Activated T-helper 1 cell treated with anti-CD3 and anti-CD28 coated beads, Interleukin-12 subunit alpha, Interleukin-12 subunit beta, Interleukin-2, Interleukin-4 antibody, amounts not matched to agents 30 ng/mL and 10 ng/mL and 1 ng/mL, durations not matched to agents 14 hours and 24 hours and 36 hours (primary cell): ENCODE measurements at regions of chr2 and their contacts with region 1.

Region 1: GRCh38 chr2:20822535-20823490 is at the start of gene LDAH:
- DNase-seq: peak; percentile 74
- H3K4me3 Mint-ChIP-seq: peak within 1 kb of the TSS; percentile 98
- H3K27ac Mint-ChIP-seq: peak within 1 kb of the TSS; percentile 98
- H3K4me1 Mint-ChIP-seq: peaks cover 28% of the 10 kb centered on the region
- H3K27me3 Mint-ChIP-seq: no peaks in the 10 kb centered on the region
- total RNA-seq, gene LDAH: 34.6 and 34.7 TPM in 2 replicates

Region 2: GRCh38 chr2:19362755-19363473 is 1459.9 kb before region 1 on chr2:
- intact Hi-C with region 1: loop called (anchors 5 kb)
- DNase-seq: no peak
- H3K4me3 Mint-ChIP-seq: peak overlapping the region; percentile 90
- H3K27ac Mint-ChIP-seq: no peak overlapping the region
- H3K4me1 Mint-ChIP-seq: peaks cover 24% of the 10 kb centered on the region
- H3K27me3 Mint-ChIP-seq: peaks cover 94% of the 10 kb centered on the region

Region 3: DNA sequence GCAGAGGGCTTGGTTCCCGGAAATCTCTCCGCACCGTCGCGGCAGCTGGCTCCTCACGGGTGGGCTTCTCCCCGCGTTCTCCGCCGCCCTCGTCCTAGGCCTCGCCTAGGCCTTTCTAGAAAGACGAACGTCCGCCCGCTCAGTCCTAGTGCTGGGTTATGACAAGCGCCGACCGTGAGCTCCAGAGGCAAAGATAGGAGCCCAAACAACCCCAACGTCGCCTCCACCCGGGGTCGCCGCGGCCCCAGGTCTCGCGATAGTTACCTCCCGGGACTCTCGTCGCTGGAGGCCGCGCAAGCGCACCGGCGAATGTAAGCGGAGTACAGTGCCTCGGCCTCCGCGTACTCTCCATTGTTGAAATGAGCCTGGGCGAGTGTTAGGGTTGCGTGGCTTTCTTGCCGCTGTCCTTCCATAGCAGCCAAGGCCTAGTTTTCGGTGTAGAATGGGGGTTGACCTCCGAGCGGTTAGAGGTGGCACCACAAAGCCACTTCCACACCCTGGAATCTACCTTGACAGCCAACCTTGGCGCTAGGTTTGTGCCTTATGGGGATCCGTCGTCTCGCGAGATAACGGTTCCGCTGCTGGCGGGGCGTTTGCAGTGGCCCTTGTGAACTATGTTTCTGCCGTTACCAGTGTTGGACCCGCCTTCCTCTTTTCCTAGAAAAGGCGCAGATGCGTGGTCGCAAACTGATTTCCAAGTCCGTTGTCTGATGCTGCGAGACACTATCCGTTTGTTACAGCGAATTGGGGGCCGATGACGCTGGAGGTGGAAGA is 921.2 kb before region 1 on chr2 and contains the start of gene TTC32:
- intact Hi-C with region 1: loop called (anchors 2 kb)
- DNase-seq: peak; percentile 89
- H3K4me3 Mint-ChIP-seq: peak within 1 kb of the TSS; percentile 91
- H3K27ac Mint-ChIP-seq: peak within 1 kb of the TSS; percentile 94
- H3K4me1 Mint-ChIP-seq: peaks cover 48% of the 10 kb centered on the region
- H3K27me3 Mint-ChIP-seq: peaks cover 9% of the 10 kb centered on the region
- total RNA-seq, gene TTC32: 14.0 and 15.7 TPM in 2 replicates

Region 4: DNA sequence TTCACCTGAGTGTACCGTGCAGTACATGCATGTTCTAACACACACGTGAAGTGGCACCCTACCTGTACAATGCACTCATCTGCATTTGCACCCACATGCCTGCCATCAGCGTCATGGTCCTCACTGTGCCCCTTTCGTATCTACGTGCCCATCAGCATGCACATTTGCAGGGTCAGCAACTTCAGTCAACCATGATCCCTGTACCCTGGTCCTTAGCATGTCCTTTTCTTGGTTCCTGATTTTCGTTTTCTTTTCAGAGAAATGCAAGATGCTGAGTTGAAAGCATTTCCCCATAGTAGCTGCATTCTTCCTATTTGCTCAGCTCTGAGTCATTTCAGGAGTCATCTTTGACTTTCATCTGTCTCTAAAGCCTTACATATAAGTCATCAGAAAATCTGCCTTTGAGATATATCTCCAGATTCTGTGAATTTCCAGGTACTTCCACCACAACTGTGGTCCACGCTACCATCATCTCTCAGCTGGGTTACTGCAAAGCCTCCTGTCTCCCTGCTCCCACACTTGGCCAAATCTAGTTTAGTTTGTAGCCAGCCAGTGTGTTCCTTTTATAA is 457.5 kb before region 1 on chr2:
- intact Hi-C with region 1: loop called (anchors 2 kb)
- DNase-seq: peak; percentile 67
- H3K4me3 Mint-ChIP-seq: peak overlapping the region; percentile 2
- H3K27ac Mint-ChIP-seq: peak overlapping the region; percentile 77
- H3K4me1 Mint-ChIP-seq: peaks cover 37% of the 10 kb centered on the region
- H3K27me3 Mint-ChIP-seq: no peaks in the 10 kb centered on the region

Region 5: DNA sequence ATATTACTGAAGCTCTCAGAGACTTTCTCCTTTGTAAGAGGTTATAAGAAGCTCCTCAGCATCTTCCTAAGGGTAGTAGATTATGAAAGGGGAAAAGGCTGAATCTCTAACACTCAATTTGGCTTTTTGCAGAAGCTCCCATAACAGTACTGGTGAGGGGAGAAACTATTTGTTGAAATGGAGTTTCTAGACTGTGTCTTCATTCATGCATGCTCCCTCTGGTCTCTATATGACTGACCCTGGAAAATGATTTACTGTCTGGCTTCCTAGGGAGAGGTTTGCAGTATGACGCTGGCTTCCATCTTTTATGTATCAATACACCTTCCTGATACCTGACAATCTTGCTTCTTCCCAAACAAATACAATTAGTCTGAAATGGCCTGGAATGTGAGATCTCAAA is 63.8 kb before region 1 on chr2:
- intact Hi-C with region 1: loop called (anchors 2 kb)
- DNase-seq: no peak
- H3K4me3 Mint-ChIP-seq: no peak overlapping the region
- H3K27ac Mint-ChIP-seq: peak overlapping the region; percentile 73
- H3K4me1 Mint-ChIP-seq: peaks cover 11% of the 10 kb centered on the region
- H3K27me3 Mint-ChIP-seq: no peaks in the 10 kb centered on the region

Region 6: DNA sequence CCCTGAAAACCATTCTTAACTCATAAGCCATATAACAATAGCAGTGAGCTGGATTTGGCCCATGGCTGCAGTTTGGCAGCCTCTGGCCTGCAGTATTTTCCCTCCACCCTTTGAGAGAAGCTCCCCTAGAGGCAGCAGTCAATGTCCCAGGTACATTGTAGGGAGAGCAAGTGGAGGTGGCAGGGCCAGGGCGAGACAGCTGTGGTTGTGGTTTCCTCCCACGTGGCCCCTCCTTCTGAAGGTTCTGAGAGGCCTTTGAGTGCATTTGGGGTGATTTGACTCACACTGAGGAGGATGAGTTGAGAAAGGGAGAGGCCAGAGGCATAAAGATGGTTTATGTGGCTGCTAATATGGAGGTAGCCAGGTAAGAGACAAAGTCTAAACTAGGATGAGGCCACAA is 45.6 kb after region 1 on chr2:
- intact Hi-C with region 1: loop called (anchors 1 kb)
- DNase-seq: peak; percentile 51
- H3K4me3 Mint-ChIP-seq: no peak overlapping the region
- H3K27ac Mint-ChIP-seq: peak overlapping the region; percentile 50
- H3K4me1 Mint-ChIP-seq: peaks cover 14% of the 10 kb centered on the region
- H3K27me3 Mint-ChIP-seq: peaks cover 44% of the 10 kb centered on the region